Activated CD4-positive, alpha-beta T cell treated with anti-CD3 and anti-CD28 coated beads for 36 hours (primary cell): ENCODE measurements at regions of chr1 and their contacts with region 1.

Region 1: GRCh38 chr1:87325982-87326738 is 2.5 kb upstream of the LMO4 start:
- DNase-seq: peak; percentile 61
- ATAC-seq: no peak
- H3K4me3 Mint-ChIP-seq: no peak overlapping the region
- H3K27ac Mint-ChIP-seq: no peak overlapping the region
- H3K4me1 Mint-ChIP-seq: peaks cover 22% of the 10 kb centered on the region
- H3K27me3 Mint-ChIP-seq: peaks cover 11% of the 10 kb centered on the region

Region 2: GRCh38 chr1:87305762-87306161 is 20.4 kb before region 1 on chr1:
- CTCF ChIA-PET with region 1: interaction called, 10 read pairs
- POLR2A ChIA-PET with region 1: no interaction called
- intact Hi-C with region 1: no loop called
- DNase-seq: no peak
- ATAC-seq: no peak
- H3K4me3 Mint-ChIP-seq: no peak overlapping the region
- H3K27ac Mint-ChIP-seq: no peak overlapping the region
- H3K4me1 Mint-ChIP-seq: no peaks in the 10 kb centered on the region
- H3K27me3 Mint-ChIP-seq: peaks cover 5% of the 10 kb centered on the region

Region 3: GRCh38 chr1:87348341-87348999 is 22.3 kb after region 1 on chr1:
- CTCF ChIA-PET with region 1: interaction called, 16 read pairs
- POLR2A ChIA-PET with region 1: no interaction called
- intact Hi-C with region 1: no loop called
- DNase-seq: no peak
- ATAC-seq: no peak
- H3K4me3 Mint-ChIP-seq: no peak overlapping the region
- H3K27ac Mint-ChIP-seq: no peak overlapping the region
- H3K4me1 Mint-ChIP-seq: no peaks in the 10 kb centered on the region
- H3K27me3 Mint-ChIP-seq: no peaks in the 10 kb centered on the region